Motor neuron (in vitro differentiated cells): ENCODE measurements at regions of chr11 and their contacts with region 1.

Region 1: GRCh38 chr11:59429924-59430516 is 3.8 kb upstream of the OR5A2 start:
- ATAC-seq: peak in 3 of 8 experiments; percentile 75 to 77 (median 76)
- H3K4me3 ChIP-seq: no peak overlapping the region
- H3K27ac ChIP-seq: no peak overlapping the region
- H3K4me1 ChIP-seq: peaks cover 0 to 14% of the 10 kb centered on the region in 2 donors

Region 2: DNA sequence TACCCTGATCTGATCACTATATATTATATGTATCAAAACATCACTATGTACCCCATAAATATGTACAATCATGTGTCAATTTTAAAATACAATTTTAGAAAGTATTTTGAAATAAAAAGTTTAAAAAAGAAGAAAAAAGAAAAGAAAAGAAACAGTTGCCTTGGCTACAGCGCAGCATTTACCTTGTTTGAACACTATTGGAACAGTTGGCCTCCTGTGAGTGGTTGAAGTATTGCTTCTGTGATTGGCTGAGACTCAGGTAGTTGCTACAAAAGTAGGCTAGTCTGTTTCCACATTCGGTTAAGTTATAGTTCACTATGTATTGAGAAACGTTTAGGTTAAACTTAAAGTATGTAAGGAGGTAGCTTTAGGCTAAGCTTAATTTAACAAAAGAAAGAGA is 266.0 kb before region 1 on chr11:
- in situ Hi-C with region 1: loop called in 1 of 9 experiments (anchors 10 kb)
- ATAC-seq: no peak
- H3K4me3 ChIP-seq: no peak overlapping the region
- H3K27ac ChIP-seq: no peak overlapping the region
- H3K4me1 ChIP-seq: no peaks in the 10 kb centered on the region

Region 3: GRCh38 chr11:59186130-59186594 is 243.9 kb before region 1 on chr11:
- in situ Hi-C with region 1: loop called in 2 of 9 experiments (anchors 25 kb)
- ATAC-seq: peak in 4 of 8 experiments; percentile 5 to 72 (median 30)
- H3K4me3 ChIP-seq: no peak overlapping the region
- H3K27ac ChIP-seq: peak overlapping the region; percentile 84 to 87
- H3K4me1 ChIP-seq: peaks cover 43 to 55% of the 10 kb centered on the region in 2 donors

Region 4: GRCh38 chr11:59866836-59867235 is 436.8 kb after region 1 on chr11:
- in situ Hi-C with region 1: no loop called
- ATAC-seq: no peak
- H3K4me3 ChIP-seq: no peak overlapping the region
- H3K27ac ChIP-seq: no peak overlapping the region
- H3K4me1 ChIP-seq: no peaks in the 10 kb centered on the region